ENCODE measurements at regions of chr2 and their contacts with region 1.

Region 1: DNA sequence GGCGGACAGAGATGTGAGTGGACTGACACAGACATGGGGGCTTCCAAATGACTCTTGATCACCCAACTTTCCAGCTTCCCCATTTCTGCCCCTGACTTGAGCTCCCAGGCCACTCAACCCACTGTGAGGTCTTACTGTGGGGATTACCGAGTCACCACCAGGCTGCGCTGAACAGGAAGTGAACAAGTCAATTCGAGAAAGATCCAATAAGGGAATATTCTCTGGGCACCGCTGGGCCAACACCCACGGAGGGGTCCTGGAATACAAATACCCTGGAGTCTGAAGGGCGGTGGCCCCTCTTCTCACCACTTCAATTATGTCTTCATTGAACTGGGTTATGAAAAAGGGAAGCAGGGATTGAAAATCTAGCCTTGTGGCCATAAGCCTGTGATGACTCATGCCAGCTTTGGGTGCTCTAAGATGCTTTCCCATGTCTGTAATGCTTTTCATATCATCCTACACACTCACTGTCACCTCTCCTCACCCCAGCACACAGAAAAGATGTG is 37.7 kb downstream of the BCL11A start:
- DNase-seq: peak; percentile 79
- ATAC-seq: peak; percentile 74
- H3K4me3 ChIP-seq: peak overlapping the region in 1 of 5 experiments; percentile 9
- H3K4me3 Mint-ChIP-seq: peak overlapping the region; percentile 75
- H3K27ac ChIP-seq: peak overlapping the region; percentile 64 to 85
- H3K27ac Mint-ChIP-seq: peak overlapping the region; percentile 86
- H3K4me1 ChIP-seq: peaks cover 96 to 98% of the 10 kb centered on the region in 2 donors
- H3K4me1 Mint-ChIP-seq: peaks cover 92% of the 10 kb centered on the region
- H3K27me3 ChIP-seq: no peaks in the 10 kb centered on the region
- H3K27me3 Mint-ChIP-seq: no peaks in the 10 kb centered on the region
- CTCF ChIP-seq: peak; percentile 15

Region 2: DNA sequence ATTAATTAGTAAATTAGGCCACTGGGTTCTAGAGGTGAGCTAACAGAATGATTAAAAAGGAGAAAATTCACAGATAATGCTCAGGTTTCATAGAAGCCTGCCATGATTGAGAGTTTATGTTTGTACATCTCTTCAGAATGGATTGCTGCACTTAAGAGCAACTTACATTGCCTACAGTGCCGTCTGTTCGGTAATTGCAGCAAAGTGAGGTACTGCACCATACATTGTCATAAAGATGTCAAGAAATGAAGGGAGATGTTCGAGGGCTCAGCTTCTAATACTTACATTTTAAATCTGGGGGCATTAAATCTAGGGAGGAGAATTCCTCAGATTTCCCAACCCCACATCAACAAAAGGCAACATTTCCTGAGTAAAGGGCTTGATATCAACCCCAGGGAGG is 1298.4 kb before region 1 on chr2:
- CTCF ChIA-PET with region 1: no interaction called
- POLR2A ChIA-PET with region 1: no interaction called
- intact Hi-C with region 1: no loop called
- DNase-seq: no peak
- ATAC-seq: no peak
- H3K4me3 ChIP-seq: no peak overlapping the region
- H3K4me3 Mint-ChIP-seq: no peak overlapping the region
- H3K27ac ChIP-seq: no peak overlapping the region
- H3K27ac Mint-ChIP-seq: no peak overlapping the region
- H3K4me1 ChIP-seq: no peaks in the 10 kb centered on the region
- H3K4me1 Mint-ChIP-seq: no peaks in the 10 kb centered on the region
- H3K27me3 ChIP-seq: no peaks in the 10 kb centered on the region
- H3K27me3 Mint-ChIP-seq: peaks cover 12% of the 10 kb centered on the region
- CTCF ChIP-seq: no peak

Region 3: DNA sequence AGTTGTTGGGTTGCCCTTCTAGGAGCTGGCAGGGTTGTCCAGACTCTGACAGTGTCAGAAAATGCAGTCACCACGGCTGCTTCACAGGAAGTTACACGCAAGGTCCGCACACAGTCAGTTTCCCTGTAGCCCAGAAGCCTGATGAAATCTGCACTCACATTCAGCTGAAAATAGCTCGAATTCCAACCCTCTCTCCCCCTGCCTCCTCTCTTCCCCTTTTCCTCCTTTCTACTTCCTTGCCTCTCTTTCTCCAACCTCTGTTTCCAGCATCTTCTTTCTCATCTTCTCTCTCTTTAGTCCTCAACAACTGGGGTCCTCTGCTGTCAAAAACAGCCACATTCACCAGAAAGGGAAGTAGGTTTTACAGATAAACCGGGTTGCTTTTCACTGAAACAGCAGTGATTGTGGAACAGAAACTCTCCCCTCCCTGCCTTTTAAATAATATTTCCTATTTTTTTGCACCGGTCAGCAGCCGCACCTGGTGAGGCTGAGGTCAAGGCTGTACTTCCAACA is 31.6 kb before region 1 on chr2:
- CTCF ChIA-PET with region 1: interaction called, 3 read pairs
- POLR2A ChIA-PET with region 1: no interaction called
- intact Hi-C with region 1: loop called (anchors 5 kb)
- DNase-seq: peak; percentile 76
- ATAC-seq: peak; percentile 68
- H3K4me3 ChIP-seq: peak overlapping the region; percentile 11 to 59 (median 48)
- H3K4me3 Mint-ChIP-seq: peak overlapping the region; percentile 79
- H3K27ac ChIP-seq: peak overlapping the region; percentile 76 to 93
- H3K27ac Mint-ChIP-seq: peak overlapping the region; percentile 88
- H3K4me1 ChIP-seq: peaks cover 99% of the 10 kb centered on the region in 2 donors
- H3K4me1 Mint-ChIP-seq: peaks cover 94% of the 10 kb centered on the region
- H3K27me3 ChIP-seq: no peaks in the 10 kb centered on the region
- H3K27me3 Mint-ChIP-seq: no peaks in the 10 kb centered on the region
- CTCF ChIP-seq: no peak

Region 4: GRCh38 chr2:60504049-60504448 is 11.7 kb before region 1 on chr2:
- CTCF ChIA-PET with region 1: interaction called, 6 read pairs
- POLR2A ChIA-PET with region 1: interaction called, 3 read pairs
- intact Hi-C with region 1: loop called (anchors 1 kb)
- DNase-seq: no peak
- ATAC-seq: peak; percentile 36
- H3K4me3 ChIP-seq: peak overlapping the region in 2 of 5 experiments; percentile 1 to 32
- H3K4me3 Mint-ChIP-seq: peak overlapping the region; percentile 68
- H3K27ac ChIP-seq: peak overlapping the region; percentile 48 to 93
- H3K27ac Mint-ChIP-seq: peak overlapping the region; percentile 92
- H3K4me1 ChIP-seq: peaks cover 96% of the 10 kb centered on the region in 2 donors
- H3K4me1 Mint-ChIP-seq: peaks cover 94% of the 10 kb centered on the region
- H3K27me3 ChIP-seq: no peaks in the 10 kb centered on the region
- H3K27me3 Mint-ChIP-seq: no peaks in the 10 kb centered on the region
- CTCF ChIP-seq: peak; percentile 37

Region 5: GRCh38 chr2:60530660-60531281 is 15.0 kb after region 1 on chr2:
- CTCF ChIA-PET with region 1: interaction called, 5 read pairs
- POLR2A ChIA-PET with region 1: interaction called, 3 read pairs
- intact Hi-C with region 1: loop called (anchors 1 kb)
- DNase-seq: peak; percentile 42
- ATAC-seq: peak; percentile 34
- H3K4me3 ChIP-seq: peak overlapping the region in 4 of 5 experiments; percentile 7 to 51 (median 20)
- H3K4me3 Mint-ChIP-seq: peak overlapping the region; percentile 77
- H3K27ac ChIP-seq: peak overlapping the region; percentile 33 to 80
- H3K27ac Mint-ChIP-seq: peak overlapping the region; percentile 79
- H3K4me1 ChIP-seq: peaks cover 99% of the 10 kb centered on the region in 2 donors
- H3K4me1 Mint-ChIP-seq: peaks cover 98% of the 10 kb centered on the region
- H3K27me3 ChIP-seq: no peaks in the 10 kb centered on the region
- H3K27me3 Mint-ChIP-seq: no peaks in the 10 kb centered on the region
- CTCF ChIP-seq: no peak

Region 6: DNA sequence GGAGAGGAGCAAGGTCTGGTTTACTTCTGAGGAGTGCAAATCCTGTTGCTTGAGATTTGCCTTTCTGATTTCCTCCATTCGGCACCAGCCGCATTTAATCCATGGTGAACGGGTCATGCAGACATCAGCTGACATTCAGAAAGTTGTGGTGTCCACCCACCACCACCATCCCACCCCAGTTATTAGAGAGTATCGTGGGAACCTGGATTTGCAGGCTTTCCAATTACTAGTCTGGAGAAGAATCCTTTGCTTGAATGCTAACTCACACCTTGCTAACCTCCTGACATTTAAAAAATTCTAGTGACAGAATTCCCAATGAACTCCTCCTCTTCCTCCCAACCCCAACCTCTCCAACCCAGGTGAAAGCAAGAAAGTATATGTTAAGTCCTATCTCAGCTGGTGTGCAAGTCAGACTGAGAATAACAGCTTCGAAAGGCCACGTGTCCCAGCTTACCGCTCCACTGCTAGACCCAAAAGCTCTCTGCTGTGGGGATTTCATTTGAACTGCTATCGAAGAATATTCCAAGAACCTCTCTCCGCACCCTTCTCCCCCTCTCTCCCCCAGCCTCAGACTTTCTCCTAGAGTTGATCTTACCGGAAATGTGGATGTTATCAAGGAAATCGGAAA is 20.0 kb after region 1 on chr2:
- CTCF ChIA-PET with region 1: interaction called, 5 read pairs
- POLR2A ChIA-PET with region 1: interaction called, 5 read pairs
- intact Hi-C with region 1: loop called (anchors 2 kb)
- DNase-seq: no peak
- ATAC-seq: peak; percentile 55
- H3K4me3 ChIP-seq: peak overlapping the region in 2 of 5 experiments; percentile 13
- H3K4me3 Mint-ChIP-seq: peak overlapping the region; percentile 70
- H3K27ac ChIP-seq: peak overlapping the region; percentile 23 to 80
- H3K27ac Mint-ChIP-seq: peak overlapping the region; percentile 69
- H3K4me1 ChIP-seq: peaks cover 89 to 99% of the 10 kb centered on the region in 2 donors
- H3K4me1 Mint-ChIP-seq: peaks cover 91% of the 10 kb centered on the region
- H3K27me3 ChIP-seq: no peaks in the 10 kb centered on the region
- H3K27me3 Mint-ChIP-seq: no peaks in the 10 kb centered on the region
- CTCF ChIP-seq: no peak